AG04449 (cell line): ENCODE measurements at regions of chr5 and their contacts with region 1.

Region 1: DNA sequence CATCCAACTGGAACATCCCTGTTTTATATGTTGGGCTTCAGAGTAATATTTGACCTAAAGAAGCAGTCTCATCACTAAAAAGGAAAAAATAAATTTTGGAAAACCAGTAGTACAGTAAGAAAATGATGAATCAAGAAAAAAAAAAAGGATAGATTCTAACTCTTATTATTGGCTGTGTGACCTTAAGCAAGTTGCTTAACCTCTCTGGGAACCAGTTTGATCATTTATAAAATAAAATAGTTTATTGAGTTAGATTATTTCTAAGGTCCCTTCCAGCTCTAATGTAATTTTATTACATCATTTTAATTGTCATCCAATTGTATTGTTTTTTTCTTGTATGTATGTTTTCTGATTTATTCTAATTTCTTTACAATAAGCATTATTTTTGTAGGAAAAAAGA is 127.0 kb downstream of the PRELID2 start:
- DNase-seq: no peak
- H3K4me3 ChIP-seq: no peak overlapping the region
- CTCF ChIP-seq: no peak

Region 2: DNA sequence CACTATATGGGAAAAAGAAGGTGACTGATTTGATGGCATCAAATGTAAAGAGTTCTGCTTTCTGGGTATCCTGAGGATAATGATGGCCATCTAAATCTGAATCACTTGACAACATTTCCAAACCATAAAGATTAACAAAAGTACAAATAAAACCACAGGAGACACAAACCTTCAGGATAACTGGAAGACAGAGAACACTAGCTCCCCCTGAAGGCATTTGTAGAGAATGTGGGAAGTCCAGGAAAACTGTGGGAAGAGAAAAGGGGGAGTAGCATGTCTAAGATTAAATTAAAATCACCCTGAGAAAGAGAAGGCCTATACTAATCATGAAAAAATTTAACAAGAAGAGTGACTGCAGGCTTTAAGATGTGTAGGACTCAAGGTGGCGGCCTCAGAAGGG is 10.8 kb after region 1 on chr5:
- CTCF ChIA-PET with region 1: interaction called, 14 read pairs
- POLR2A ChIA-PET with region 1: no interaction called
- DNase-seq: peak; percentile 14
- H3K4me3 ChIP-seq: no peak overlapping the region
- CTCF ChIP-seq: peak; percentile 53